Dorsolateral prefrontal cortex (tissue), 120 donors: ENCODE measurements at regions of chr21 and their contacts with region 1.

Region 1: DNA sequence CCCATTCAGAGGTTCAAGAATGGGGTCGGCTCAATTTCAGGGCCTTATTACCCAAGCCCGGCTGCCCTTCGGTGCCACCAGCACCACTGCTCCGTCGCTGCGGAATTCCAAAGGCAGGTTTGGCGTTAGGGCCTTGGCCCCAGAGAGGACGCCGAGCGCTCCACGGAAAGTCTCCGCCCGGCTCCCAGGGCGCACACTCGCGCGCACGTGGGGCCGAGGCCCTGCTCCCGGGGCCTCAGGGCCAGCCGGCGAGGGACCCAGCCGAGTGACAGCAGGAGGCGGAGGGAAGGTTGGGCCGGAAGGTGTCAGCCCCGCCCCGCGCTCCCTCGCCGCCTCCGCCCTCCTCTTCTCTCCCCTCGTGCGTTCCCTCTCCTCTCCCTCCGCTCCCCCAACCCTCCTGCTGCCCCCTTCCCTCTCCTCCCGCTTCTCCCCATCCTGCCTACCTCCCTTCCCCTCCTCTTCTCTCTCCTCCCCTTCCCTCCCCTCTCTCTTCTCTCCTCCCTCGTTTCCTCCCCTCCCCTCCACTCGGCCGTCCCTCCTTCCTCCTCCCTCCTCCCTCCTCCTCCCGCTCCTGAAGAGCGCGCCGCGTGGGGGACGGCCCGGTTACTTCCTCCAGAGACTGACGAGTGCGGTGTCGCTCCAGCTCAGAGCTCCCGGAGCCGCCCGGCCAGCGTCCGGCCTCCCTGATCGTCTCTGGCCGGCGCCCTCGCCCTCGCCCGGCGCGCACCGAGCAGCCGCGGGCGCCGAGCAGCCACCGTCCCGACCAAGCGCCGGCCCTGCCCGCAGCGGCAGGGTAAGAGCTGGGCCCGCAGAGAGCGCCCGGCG is at the start of gene ETS2:
- DNase-seq: peak in 9 of 10 donors; percentile 48 to 89 (median 78)
- H3K4me3 ChIP-seq: peak within 1 kb of the TSS; percentile 47 to 90 (median 78)
- H3K27ac ChIP-seq: peak within 1 kb of the TSS in 58 of 59 donors; percentile 67 to 98 (median 92)
- H3K27me3 ChIP-seq: peaks cover 0 to 7% (median 0%) of the 10 kb centered on the region in 45 donors
- CTCF ChIP-seq: peak in 13 of 56 donors; percentile 2 to 40 (median 10)
- total RNA-seq, gene ETS2: 47.9 to 194 (median 111) TPM

Region 2: DNA sequence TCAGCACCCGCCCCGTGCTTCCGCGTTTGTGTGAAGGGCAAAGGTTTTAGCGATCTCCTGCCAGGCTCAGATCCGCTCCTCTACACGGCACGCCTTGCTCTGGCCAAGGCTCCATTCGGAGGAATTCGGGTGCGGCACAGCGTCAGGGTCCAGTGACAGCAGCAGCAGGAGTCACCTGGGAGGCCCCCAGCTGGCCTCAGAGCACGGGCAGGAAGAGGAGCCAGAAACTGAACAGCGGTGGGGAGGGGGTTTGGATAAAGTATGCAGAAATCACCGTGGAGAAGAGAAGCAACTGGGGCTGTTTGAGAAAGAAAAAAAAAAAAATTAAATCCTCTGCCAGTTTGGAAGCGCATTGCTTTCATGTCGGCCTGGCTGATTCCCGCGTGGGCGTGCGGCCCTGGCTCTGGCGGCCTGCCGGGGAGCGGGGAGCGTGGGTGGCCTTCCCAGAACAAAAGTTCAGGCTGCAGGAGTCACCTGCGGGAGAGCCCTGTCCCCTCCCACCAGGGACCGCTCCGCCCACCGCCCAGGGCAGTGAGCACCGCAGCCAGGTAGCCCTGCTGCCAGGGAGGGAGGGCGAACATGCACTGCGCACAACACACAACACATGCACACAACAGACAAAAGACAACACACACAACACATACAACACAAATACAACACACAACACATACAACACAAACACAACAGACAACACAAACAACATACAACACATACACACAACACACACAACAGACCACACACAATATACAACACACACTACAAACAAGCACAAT is 107.8 kb after region 1 on chr21:
- intact Hi-C with region 1: loop called in 1 of 2 experiments (anchors 10 kb)
- DNase-seq: peak in 4 of 10 donors; percentile 58 to 67 (median 66)
- H3K4me3 ChIP-seq: peak overlapping the region in 31 of 59 donors; percentile 1 to 46 (median 25)
- H3K27ac ChIP-seq: peak overlapping the region in 39 of 59 donors; percentile 8 to 83 (median 60)
- H3K27me3 ChIP-seq: peaks cover 0 to 19% (median 0%) of the 10 kb centered on the region in 45 donors
- CTCF ChIP-seq: no peak

Region 3: GRCh38 chr21:38958940-38959691 is 153.6 kb after region 1 on chr21:
- intact Hi-C with region 1: loop called in 1 of 2 experiments (anchors 5 kb)
- DNase-seq: no peak
- H3K4me3 ChIP-seq: no peak overlapping the region
- H3K27ac ChIP-seq: peak overlapping the region in 51 of 59 donors; percentile 12 to 89 (median 68)
- H3K27me3 ChIP-seq: no peaks in the 10 kb centered on the region
- CTCF ChIP-seq: no peak

Region 4: DNA sequence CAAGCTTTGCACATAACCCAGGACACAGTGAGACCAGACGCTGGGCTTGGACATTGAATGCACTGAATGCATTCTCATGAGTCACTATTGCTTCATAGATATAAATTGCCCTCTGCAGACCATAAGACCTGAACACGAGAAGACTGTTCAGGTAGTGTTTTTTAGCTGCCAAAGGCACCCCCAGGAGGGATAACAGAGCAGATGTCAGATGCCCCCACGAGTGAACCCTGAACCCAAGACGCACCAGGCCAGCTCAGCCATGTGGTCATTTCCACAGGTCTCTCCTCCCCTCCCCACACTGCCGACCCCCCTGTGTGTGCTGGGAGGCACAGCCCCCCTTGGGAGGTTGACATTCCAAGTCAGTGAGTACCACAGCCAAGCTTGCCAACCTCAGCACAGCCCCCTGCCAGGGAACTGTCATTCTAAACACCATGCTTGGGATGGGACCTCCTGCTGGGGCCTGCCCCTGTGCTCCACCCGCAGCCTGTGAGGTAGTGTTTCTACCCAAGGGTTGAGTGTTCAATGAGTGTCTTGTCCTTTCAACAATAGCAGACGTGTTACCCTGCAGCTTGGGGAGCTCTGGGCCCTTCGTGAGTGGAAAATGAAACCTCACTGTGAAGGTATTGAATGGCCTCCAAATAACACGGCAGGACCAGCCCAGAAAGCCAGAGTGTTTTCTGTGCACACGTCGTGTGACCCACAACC is 309.5 kb after region 1 on chr21:
- intact Hi-C with region 1: loop called in 1 of 2 experiments (anchors 5 kb)
- DNase-seq: no peak
- H3K4me3 ChIP-seq: no peak overlapping the region
- H3K27ac ChIP-seq: no peak overlapping the region
- H3K27me3 ChIP-seq: no peaks in the 10 kb centered on the region
- CTCF ChIP-seq: no peak